CD8-positive, alpha-beta T cell (primary cell): ENCODE measurements at regions of chr4 and their contacts with region 1.

Region 1: GRCh38 chr4:37891260-37892159 is 626 bp downstream of the TBC1D1 start:
- DNase-seq: peak; percentile 16 to 82 (median 51)
- ATAC-seq: peak; percentile 60
- H3K4me3 ChIP-seq: peak overlapping the region; percentile 60 to 80
- H3K4me3 Mint-ChIP-seq: peak overlapping the region; percentile 97
- H3K27ac ChIP-seq: peak overlapping the region; percentile 56 to 61
- H3K27ac Mint-ChIP-seq: peak overlapping the region; percentile 97
- H3K4me1 ChIP-seq: peaks cover 30% of the 10 kb centered on the region
- H3K4me1 Mint-ChIP-seq: peaks cover 44% of the 10 kb centered on the region
- H3K27me3 ChIP-seq: no peaks in the 10 kb centered on the region
- H3K27me3 Mint-ChIP-seq: no peaks in the 10 kb centered on the region
- CTCF ChIP-seq: no peak

Region 2: DNA sequence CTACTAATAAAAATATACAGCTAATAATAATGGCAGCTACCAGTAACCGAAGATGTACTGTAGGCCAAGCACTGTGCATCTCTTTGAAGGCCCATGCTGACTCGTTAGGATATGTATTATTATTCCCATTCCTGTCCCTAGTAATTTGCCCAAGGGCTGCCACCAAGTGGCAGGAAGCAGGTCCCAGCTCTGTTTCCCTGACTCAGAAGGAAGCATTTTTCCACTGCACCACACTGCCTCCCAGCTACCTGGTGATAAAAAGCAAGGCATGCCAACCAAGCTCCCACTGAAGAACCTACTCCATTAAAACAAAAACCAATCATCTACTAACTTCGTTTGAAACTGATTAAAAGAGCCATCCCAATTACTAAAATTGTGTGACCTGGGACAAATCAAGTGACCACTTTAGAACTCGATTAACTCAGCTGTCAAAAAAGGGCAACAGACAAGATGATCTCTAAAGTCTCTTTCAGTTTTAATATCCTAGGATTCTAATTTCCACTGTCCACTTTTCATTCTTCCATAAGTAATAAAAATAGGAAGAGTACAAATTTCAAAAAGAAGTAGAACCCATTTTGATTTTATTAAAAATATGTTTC is 89.3 kb before region 1 on chr4:
- CTCF ChIA-PET with region 1: interaction called, 6 read pairs
- POLR2A ChIA-PET with region 1: interaction called, 3 read pairs
- intact Hi-C with region 1: loop called in 1 of 2 experiments (anchors 1 kb)
- DNase-seq: no peak
- ATAC-seq: no peak
- H3K4me3 ChIP-seq: no peak overlapping the region
- H3K4me3 Mint-ChIP-seq: no peak overlapping the region
- H3K27ac ChIP-seq: no peak overlapping the region
- H3K27ac Mint-ChIP-seq: no peak overlapping the region
- H3K4me1 ChIP-seq: no peaks in the 10 kb centered on the region
- H3K4me1 Mint-ChIP-seq: peaks cover 2% of the 10 kb centered on the region
- H3K27me3 ChIP-seq: no peaks in the 10 kb centered on the region
- H3K27me3 Mint-ChIP-seq: no peaks in the 10 kb centered on the region
- CTCF ChIP-seq: no peak

Region 3: GRCh38 chr4:37816006-37816405 is 75.5 kb before region 1 on chr4:
- CTCF ChIA-PET with region 1: no interaction called
- POLR2A ChIA-PET with region 1: no interaction called
- intact Hi-C with region 1: no loop called
- DNase-seq: peak in 4 of 9 experiments; percentile 11 to 66 (median 54)
- ATAC-seq: peak; percentile 68
- H3K4me3 ChIP-seq: peak overlapping the region in 1 of 2 experiments; percentile 22
- H3K4me3 Mint-ChIP-seq: peak overlapping the region; percentile 55
- H3K27ac ChIP-seq: peak overlapping the region in 1 of 2 experiments; percentile 41
- H3K27ac Mint-ChIP-seq: peak overlapping the region; percentile 74
- H3K4me1 ChIP-seq: peaks cover 22% of the 10 kb centered on the region
- H3K4me1 Mint-ChIP-seq: peaks cover 21% of the 10 kb centered on the region
- H3K27me3 ChIP-seq: no peaks in the 10 kb centered on the region
- H3K27me3 Mint-ChIP-seq: no peaks in the 10 kb centered on the region
- CTCF ChIP-seq: no peak

Region 4: DNA sequence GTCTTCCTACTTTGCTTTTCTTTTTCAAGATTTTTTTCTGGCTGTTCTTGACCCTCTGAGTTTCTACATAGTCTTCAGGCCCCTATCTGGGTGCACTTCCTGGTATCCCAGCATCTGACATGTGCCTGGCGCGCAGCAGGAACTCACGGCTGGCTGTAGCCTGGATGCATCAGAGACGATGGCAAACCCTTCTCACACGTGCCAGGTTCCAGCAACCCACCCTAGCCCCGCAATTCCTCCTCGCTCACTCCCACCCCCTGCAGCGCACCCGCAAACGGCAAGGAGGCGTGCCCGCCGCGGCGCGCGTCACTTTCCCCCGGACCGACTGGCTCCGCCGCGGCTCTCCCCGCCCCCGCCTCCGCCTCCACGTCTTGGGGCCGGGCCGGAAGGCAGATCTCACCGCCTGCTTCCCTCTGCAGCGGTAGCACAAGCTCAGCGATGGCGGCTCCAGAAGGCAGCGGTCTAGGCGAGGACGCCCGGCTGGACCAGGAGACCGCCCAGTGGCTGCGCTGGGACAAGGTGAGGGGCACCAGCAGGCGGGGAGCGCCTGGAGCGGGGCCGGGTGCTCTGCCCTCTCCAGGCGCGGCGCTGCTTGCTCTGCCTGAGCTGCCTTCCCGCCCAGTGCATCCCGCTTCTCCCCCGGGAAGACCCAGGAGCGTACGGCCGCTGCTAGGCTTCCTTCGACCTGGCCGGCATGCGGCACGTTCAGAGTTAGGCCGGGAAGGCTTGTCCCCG is 65.0 kb before region 1 on chr4 and contains the start of gene PGM2:
- CTCF ChIA-PET with region 1: interaction called, 5 read pairs
- POLR2A ChIA-PET with region 1: interaction called, 13 read pairs
- intact Hi-C with region 1: loop called (anchors 1 to 2 kb)
- DNase-seq: peak; percentile 81 to 93 (median 89)
- ATAC-seq: peak; percentile 98
- H3K4me3 ChIP-seq: peak within 1 kb of the TSS; percentile 96 to 99
- H3K4me3 Mint-ChIP-seq: peak within 1 kb of the TSS; percentile 97
- H3K27ac ChIP-seq: peak within 1 kb of the TSS; percentile 76 to 79
- H3K27ac Mint-ChIP-seq: peak within 1 kb of the TSS; percentile 92
- H3K4me1 ChIP-seq: peaks cover 23% of the 10 kb centered on the region
- H3K4me1 Mint-ChIP-seq: peaks cover 53% of the 10 kb centered on the region
- H3K27me3 ChIP-seq: no peaks in the 10 kb centered on the region
- H3K27me3 Mint-ChIP-seq: no peaks in the 10 kb centered on the region
- CTCF ChIP-seq: no peak
- total RNA-seq, gene PGM2: 14.5 to 15.4 TPM

Region 5: DNA sequence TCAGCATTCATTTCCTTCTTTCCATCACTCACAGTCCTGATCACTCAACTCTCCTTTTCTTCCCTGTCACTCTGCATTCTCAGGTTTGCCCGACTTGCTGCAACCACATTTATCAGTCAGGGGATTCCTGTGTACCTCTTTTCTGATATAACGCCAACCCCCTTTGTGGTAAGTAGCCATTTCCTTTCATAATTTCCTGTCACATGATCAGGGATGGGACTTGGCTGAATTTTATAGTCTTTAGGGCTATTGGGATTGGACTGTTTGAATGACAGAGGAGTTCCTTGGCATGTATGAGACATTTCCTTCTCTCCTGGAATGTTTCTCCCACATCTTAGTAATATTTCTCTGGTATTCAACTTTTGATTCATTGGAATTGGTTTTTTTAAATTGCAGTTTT is 54.1 kb before region 1 on chr4:
- CTCF ChIA-PET with region 1: no interaction called
- POLR2A ChIA-PET with region 1: no interaction called
- intact Hi-C with region 1: no loop called
- DNase-seq: peak in 2 of 9 experiments; percentile 12 to 45
- ATAC-seq: no peak
- H3K4me3 ChIP-seq: no peak overlapping the region
- H3K4me3 Mint-ChIP-seq: peak overlapping the region; percentile 18
- H3K27ac ChIP-seq: no peak overlapping the region
- H3K27ac Mint-ChIP-seq: peak overlapping the region; percentile 32
- H3K4me1 ChIP-seq: peaks cover 14% of the 10 kb centered on the region
- H3K4me1 Mint-ChIP-seq: peaks cover 29% of the 10 kb centered on the region
- H3K27me3 ChIP-seq: no peaks in the 10 kb centered on the region
- H3K27me3 Mint-ChIP-seq: no peaks in the 10 kb centered on the region
- CTCF ChIP-seq: no peak

Region 6: GRCh38 chr4:37858872-37859271 is 32.6 kb before region 1 on chr4:
- CTCF ChIA-PET with region 1: no interaction called
- POLR2A ChIA-PET with region 1: interaction called, 4 read pairs
- intact Hi-C with region 1: loop called in 1 of 2 experiments (anchors 5 kb)
- DNase-seq: no peak
- ATAC-seq: no peak
- H3K4me3 ChIP-seq: no peak overlapping the region
- H3K4me3 Mint-ChIP-seq: no peak overlapping the region
- H3K27ac ChIP-seq: no peak overlapping the region
- H3K27ac Mint-ChIP-seq: no peak overlapping the region
- H3K4me1 ChIP-seq: no peaks in the 10 kb centered on the region
- H3K4me1 Mint-ChIP-seq: no peaks in the 10 kb centered on the region
- H3K27me3 ChIP-seq: no peaks in the 10 kb centered on the region
- H3K27me3 Mint-ChIP-seq: no peaks in the 10 kb centered on the region
- CTCF ChIP-seq: no peak

Region 7: GRCh38 chr4:37946503-37947179 is 55.1 kb after region 1 on chr4:
- CTCF ChIA-PET with region 1: no interaction called
- POLR2A ChIA-PET with region 1: no interaction called
- intact Hi-C with region 1: no loop called
- DNase-seq: no peak
- ATAC-seq: no peak
- H3K4me3 ChIP-seq: no peak overlapping the region
- H3K4me3 Mint-ChIP-seq: no peak overlapping the region
- H3K27ac ChIP-seq: no peak overlapping the region
- H3K27ac Mint-ChIP-seq: peak overlapping the region; percentile 60
- H3K4me1 ChIP-seq: peaks cover 4% of the 10 kb centered on the region
- H3K4me1 Mint-ChIP-seq: peaks cover 49% of the 10 kb centered on the region
- H3K27me3 ChIP-seq: no peaks in the 10 kb centered on the region
- H3K27me3 Mint-ChIP-seq: no peaks in the 10 kb centered on the region
- CTCF ChIP-seq: no peak